ENCODE measurements at regions of chr10 and their contacts with region 1.

Region 1: DNA sequence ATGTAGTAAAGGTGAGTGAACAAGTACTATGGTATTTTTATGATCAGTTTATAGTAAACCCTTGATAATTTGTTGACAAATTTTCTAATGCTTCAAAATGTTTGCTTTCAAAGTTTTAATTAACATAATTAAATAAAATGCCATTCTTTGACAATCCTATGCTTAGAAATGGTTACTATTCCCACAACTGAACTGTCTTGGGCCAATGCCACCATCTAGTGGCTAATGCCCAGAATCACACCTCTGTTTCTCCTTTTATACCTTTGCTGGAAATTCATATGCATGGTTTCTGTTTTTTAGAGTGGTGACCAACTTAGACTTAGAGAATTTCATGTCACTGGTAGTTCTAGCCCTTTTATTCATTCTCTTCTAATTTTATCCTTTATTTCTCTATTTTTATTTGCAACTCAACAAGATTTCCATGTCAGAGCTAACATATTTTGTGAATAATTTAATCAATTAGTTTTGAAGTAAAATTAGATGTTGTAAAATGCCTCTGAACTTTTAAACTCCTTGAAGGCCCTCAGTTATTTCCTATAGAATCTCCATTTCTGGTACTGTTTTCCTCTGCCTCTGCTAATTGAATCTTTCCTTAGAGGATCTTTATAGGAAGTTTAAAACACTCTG is 31.1 kb downstream of the PCGF5 start:
- DNase-seq: peak; percentile 35
- H3K4me3 Mint-ChIP-seq: no peak overlapping the region
- H3K27ac Mint-ChIP-seq: no peak overlapping the region
- H3K4me1 Mint-ChIP-seq: peaks cover 5% of the 10 kb centered on the region
- H3K27me3 Mint-ChIP-seq: no peaks in the 10 kb centered on the region

Region 2: DNA sequence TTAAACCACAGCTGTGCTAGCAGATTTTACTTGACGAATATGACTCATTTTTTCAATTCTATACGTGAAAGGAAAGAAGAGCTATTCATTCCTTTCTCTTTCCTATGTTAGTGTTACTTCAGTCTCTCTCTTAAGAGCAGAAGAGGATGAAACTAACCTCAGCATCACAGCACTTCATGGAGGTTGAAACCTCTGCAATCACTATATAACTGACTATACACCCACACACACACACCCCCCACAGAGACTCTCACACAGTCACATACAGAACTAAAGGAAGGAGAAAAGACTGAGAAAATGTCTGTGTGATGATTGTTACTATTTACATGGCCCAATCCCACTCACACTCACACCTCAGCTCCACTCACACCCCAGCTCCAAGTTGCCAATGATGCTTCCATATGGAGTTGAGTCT is 1445.9 kb before region 1 on chr10:
- intact Hi-C with region 1: loop called (anchors 2 kb)
- DNase-seq: no peak
- H3K4me3 Mint-ChIP-seq: no peak overlapping the region
- H3K27ac Mint-ChIP-seq: peak overlapping the region; percentile 42
- H3K4me1 Mint-ChIP-seq: peaks cover 31% of the 10 kb centered on the region
- H3K27me3 Mint-ChIP-seq: peaks cover 29% of the 10 kb centered on the region

Region 3: GRCh38 chr10:90912174-90912573 is 339.4 kb before region 1 on chr10:
- intact Hi-C with region 1: loop called (anchors 1 kb)
- DNase-seq: no peak
- H3K4me3 Mint-ChIP-seq: no peak overlapping the region
- H3K27ac Mint-ChIP-seq: no peak overlapping the region
- H3K4me1 Mint-ChIP-seq: no peaks in the 10 kb centered on the region
- H3K27me3 Mint-ChIP-seq: peaks cover 4% of the 10 kb centered on the region

Region 4: DNA sequence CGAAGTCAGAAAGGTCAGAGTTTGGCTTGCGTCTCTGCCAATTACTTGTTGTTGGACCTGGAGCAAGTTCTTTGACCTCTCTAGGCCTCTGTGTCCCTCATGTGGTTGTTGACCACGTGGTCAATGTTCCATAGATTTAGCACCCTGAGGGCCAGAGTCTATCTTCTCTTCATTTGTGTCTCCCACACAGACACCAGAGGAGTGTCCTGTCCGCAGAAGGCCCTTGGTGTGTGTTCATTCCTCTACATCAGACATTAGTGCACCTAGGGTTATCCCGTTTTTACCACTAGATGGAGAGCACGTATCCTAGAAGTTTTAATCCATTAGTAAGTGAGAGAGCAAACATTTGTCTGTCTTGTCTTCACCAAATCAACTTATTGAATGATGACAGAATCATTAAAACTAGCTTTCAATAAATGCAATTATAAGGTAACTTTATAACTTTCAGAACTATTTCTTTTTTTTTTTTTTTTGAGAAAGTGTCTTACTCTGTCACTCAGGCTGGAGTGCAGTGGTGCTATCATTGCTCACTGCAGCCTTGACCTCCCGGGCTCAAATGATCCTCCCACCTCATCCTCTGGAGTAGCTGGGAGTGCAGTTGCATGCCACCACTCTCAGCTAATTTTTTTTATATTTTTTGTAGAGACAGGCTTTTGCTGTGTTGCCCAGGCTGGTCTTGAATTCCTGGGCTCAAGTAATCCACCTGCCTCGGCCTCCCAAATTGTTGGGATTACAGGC is 208.2 kb before region 1 on chr10:
- intact Hi-C with region 1: loop called (anchors 1 kb)
- DNase-seq: no peak
- H3K4me3 Mint-ChIP-seq: no peak overlapping the region
- H3K27ac Mint-ChIP-seq: no peak overlapping the region
- H3K4me1 Mint-ChIP-seq: peaks cover 2% of the 10 kb centered on the region
- H3K27me3 Mint-ChIP-seq: peaks cover 38% of the 10 kb centered on the region

Region 5: DNA sequence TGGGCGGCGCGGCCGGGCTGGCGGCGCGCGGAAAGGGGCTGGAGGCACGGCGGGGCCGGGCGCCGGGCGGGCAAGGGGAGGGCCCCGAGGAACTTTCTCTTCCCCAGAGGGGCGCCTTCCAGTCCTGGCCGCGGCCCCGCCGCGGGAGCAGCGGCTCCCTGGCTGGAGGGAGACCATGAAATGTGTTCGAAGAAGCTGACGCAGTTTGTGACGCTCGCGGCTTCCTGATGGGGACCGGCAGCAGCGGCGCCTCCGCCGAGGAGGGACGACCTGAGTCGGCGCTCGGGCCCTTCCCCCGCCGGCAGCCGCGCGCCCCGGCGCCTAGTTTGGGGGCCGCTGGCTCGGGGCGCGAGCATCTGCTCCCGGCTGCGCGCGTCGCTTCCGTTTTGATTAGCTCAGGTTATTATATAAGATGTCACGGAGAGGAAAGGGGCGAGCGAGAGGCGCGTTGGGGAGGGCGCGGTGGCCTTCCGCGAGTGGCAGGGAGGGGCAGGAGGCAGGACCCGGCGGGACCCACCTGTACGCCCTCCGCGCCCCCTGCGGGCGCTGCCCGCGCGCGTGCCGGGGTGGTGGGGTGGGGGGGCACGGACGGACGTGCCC is 88.2 kb before region 1 on chr10:
- intact Hi-C with region 1: loop called (anchors 1 kb)
- DNase-seq: peak; percentile 66
- H3K4me3 Mint-ChIP-seq: peak overlapping the region; percentile 90
- H3K27ac Mint-ChIP-seq: peak overlapping the region; percentile 90
- H3K4me1 Mint-ChIP-seq: peaks cover 39% of the 10 kb centered on the region
- H3K27me3 Mint-ChIP-seq: peaks cover 12% of the 10 kb centered on the region

Region 6: DNA sequence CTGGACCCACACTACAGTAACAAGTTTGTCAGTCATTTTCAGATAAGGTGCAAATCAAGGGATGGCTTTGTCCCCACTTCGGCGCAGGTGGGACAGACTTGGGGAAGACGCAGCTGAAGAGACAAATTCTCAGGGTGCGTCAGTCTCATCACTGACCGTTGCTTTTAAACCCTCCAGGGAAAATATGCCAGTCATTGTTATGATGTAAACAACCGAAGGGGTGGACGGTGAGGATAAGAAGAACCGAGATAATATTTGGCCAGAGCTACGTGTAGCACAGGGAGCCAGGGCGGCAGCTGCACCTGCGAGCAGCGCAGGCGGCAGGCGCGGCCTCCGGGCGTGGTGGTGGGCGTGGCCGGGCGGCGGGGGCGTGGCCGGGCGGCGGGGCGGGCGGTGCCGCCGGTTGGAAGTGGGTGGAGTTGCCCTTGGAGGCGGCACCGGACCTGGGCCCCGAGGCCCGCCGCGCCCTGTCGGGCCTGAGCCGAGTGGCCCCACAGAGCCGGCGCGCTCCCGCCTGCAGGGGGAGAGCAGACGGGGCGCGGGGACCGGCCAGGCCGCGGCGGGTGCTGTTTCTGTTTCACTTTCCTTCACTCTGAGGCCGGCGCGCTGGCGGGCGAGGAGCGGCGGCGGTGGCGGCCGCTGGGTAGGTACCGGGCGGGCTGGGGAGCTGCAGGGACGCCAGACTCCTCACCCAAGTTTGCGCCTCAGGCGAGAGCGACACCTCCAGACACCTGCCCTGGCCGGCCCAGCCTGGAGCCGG is 31.2 kb before region 1 on chr10 and contains the start of gene PCGF5:
- intact Hi-C with region 1: loop called (anchors 1 kb)
- DNase-seq: peak; percentile 91
- H3K4me3 Mint-ChIP-seq: peak within 1 kb of the TSS; percentile 91
- H3K27ac Mint-ChIP-seq: peak within 1 kb of the TSS; percentile 79
- H3K4me1 Mint-ChIP-seq: peaks cover 54% of the 10 kb centered on the region
- H3K27me3 Mint-ChIP-seq: no peaks in the 10 kb centered on the region
- total RNA-seq, gene PCGF5: 51.7 TPM in 2 replicates

Measured in activated T-helper 1 cell treated with anti-CD3 and anti-CD28 coated beads, Interleukin-12 subunit alpha, Interleukin-12 subunit beta, Interleukin-2, Interleukin-4 antibody, amounts not matched to agents 30 ng/mL and 10 ng/mL and 1 ng/mL, durations not matched to agents 14 hours and 24 hours and 36 hours (primary cell).